ENCODE measurements at regions of chr11 and their contacts with region 1.

Region 1: GRCh38 chr11:77121096-77121640 is 6.9 kb upstream of the MYO7A start:
- DNase-seq: no peak
- H3K4me3 ChIP-seq: no peak overlapping the region
- H3K27ac ChIP-seq: no peak overlapping the region
- H3K4me1 ChIP-seq: no peaks in the 10 kb centered on the region
- H3K27me3 ChIP-seq: no peaks in the 10 kb centered on the region
- CTCF ChIP-seq: no peak
- EP300 ChIP-seq: no peak
- POLR2A ChIP-seq: no peak
- RAD21 ChIP-seq: no peak

Region 2: GRCh38 chr11:77107950-77108349 is 13.2 kb before region 1 on chr11:
- CTCF ChIA-PET with region 1: interaction called, 170 read pairs
- POLR2A ChIA-PET with region 1: interaction called, 3 read pairs
- DNase-seq: no peak
- H3K4me3 ChIP-seq: no peak overlapping the region
- H3K27ac ChIP-seq: no peak overlapping the region
- H3K4me1 ChIP-seq: peaks cover 0 to under 1% (median 0%) of the 10 kb centered on the region in 4 experiments; a peak in 1 of 7 replicates
- H3K27me3 ChIP-seq: no peaks in the 10 kb centered on the region
- CTCF ChIP-seq: no peak
- EP300 ChIP-seq: no peak
- POLR2A ChIP-seq: no peak
- RAD21 ChIP-seq: no peak

Region 3: GRCh38 chr11:77217156-77217555 is 96.0 kb after region 1 on chr11:
- CTCF ChIA-PET with region 1: no interaction called
- POLR2A ChIA-PET with region 1: no interaction called
- DNase-seq: no peak
- H3K4me3 ChIP-seq: no peak overlapping the region
- H3K27ac ChIP-seq: no peak overlapping the region
- H3K4me1 ChIP-seq: no peaks in the 10 kb centered on the region
- H3K27me3 ChIP-seq: no peaks in the 10 kb centered on the region
- CTCF ChIP-seq: no peak
- EP300 ChIP-seq: no peak
- POLR2A ChIP-seq: no peak
- RAD21 ChIP-seq: no peak